Right cardiac atrium (tissue), 5 donors: ENCODE measurements at regions of chr12 and their contacts with region 1.

Region 1: GRCh38 chr12:59431266-59431665 is 164.6 kb upstream of the SLC16A7 start:
- DNase-seq: no peak
- ATAC-seq: no peak
- H3K4me3 ChIP-seq: no peak overlapping the region
- H3K27ac ChIP-seq: no peak overlapping the region
- H3K4me1 ChIP-seq: no peaks in the 10 kb centered on the region
- H3K27me3 ChIP-seq: no peaks in the 10 kb centered on the region

Region 2: GRCh38 chr12:59792647-59793046 is 361.4 kb after region 1 on chr12:
- intact Hi-C with region 1: loop called in 1 of 4 experiments (anchors 10 kb)
- DNase-seq: peak in 1 of 3 donors; percentile 39
- ATAC-seq: peak in 1 of 2 donors; percentile 38
- H3K4me3 ChIP-seq: no peak overlapping the region
- H3K27ac ChIP-seq: no peak overlapping the region
- H3K4me1 ChIP-seq: no peaks in the 10 kb centered on the region
- H3K27me3 ChIP-seq: no peaks in the 10 kb centered on the region